Activated CD4-positive, alpha-beta T cell treated with anti-CD3 and anti-CD28 coated beads for 36 hours (primary cell): ENCODE measurements at regions of chr17 and their contacts with region 1.

Region 1: GRCh38 chr17:76240461-76241203 is at the start of gene RNF157:
- DNase-seq: peak; percentile 73
- ATAC-seq: peak; percentile 84
- H3K4me3 Mint-ChIP-seq: peak within 1 kb of the TSS; percentile 78
- H3K27ac Mint-ChIP-seq: peak within 1 kb of the TSS; percentile 88
- H3K4me1 Mint-ChIP-seq: peaks cover 58% of the 10 kb centered on the region
- H3K27me3 Mint-ChIP-seq: peaks cover 2% of the 10 kb centered on the region
- total RNA-seq, gene RNF157: 24.0 to 39.4 TPM

Region 2: DNA sequence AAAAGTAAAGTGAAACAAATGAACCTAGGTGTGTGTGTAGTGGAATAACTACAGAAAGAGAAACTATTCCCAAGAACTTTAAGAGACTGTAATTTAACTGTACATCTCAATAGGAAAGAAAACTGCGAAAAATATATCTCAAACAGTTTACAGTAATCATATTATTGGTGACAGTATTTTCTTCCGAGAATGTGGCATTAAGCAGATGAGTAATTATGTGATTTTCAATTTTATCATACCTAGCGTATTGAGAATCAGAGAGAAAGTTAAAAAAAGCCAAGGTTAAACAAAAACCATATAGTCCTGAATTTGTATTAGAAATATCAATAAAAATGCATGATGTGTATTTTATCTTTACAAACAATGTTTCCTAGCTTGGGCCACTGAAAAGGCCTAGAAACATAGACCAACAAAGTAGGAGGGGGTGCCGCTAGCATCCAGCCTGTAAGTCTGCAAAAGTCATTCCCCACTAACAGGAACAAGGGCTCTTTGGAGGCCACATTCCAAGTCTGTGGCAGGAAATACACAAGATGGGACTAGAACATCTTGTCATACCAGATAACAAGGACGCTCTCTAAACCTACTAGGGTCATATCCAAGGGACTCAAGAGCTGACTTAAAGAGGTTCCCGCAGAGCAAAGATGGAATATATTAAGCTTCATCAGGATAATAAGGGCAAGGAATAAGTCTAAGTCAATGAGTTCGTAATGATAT is 20.8 kb before region 1 on chr17:
- CTCF ChIA-PET with region 1: interaction called, 6 read pairs
- POLR2A ChIA-PET with region 1: no interaction called
- intact Hi-C with region 1: loop called in 1 of 2 experiments (anchors 2 kb)
- DNase-seq: no peak
- ATAC-seq: peak; percentile 72
- H3K4me3 Mint-ChIP-seq: no peak overlapping the region
- H3K27ac Mint-ChIP-seq: peak overlapping the region; percentile 67
- H3K4me1 Mint-ChIP-seq: peaks cover 33% of the 10 kb centered on the region
- H3K27me3 Mint-ChIP-seq: no peaks in the 10 kb centered on the region

Region 3: GRCh38 chr17:76296186-76296585 is 55.6 kb after region 1 on chr17:
- CTCF ChIA-PET with region 1: no interaction called
- POLR2A ChIA-PET with region 1: no interaction called
- intact Hi-C with region 1: no loop called
- DNase-seq: no peak
- ATAC-seq: no peak
- H3K4me3 Mint-ChIP-seq: no peak overlapping the region
- H3K27ac Mint-ChIP-seq: no peak overlapping the region
- H3K4me1 Mint-ChIP-seq: no peaks in the 10 kb centered on the region
- H3K27me3 Mint-ChIP-seq: no peaks in the 10 kb centered on the region